ENCODE measurements at regions of chr15 and their contacts with region 1.

Region 1: GRCh38 chr15:44738340-44738984 is 2.1 kb downstream of the TRIM69 start:
- DNase-seq: no peak
- H3K4me3 Mint-ChIP-seq: peak overlapping the region; percentile 12
- H3K27ac Mint-ChIP-seq: peak overlapping the region; percentile 78
- H3K4me1 Mint-ChIP-seq: peaks cover 51% of the 10 kb centered on the region
- H3K27me3 Mint-ChIP-seq: no peaks in the 10 kb centered on the region

Region 2: DNA sequence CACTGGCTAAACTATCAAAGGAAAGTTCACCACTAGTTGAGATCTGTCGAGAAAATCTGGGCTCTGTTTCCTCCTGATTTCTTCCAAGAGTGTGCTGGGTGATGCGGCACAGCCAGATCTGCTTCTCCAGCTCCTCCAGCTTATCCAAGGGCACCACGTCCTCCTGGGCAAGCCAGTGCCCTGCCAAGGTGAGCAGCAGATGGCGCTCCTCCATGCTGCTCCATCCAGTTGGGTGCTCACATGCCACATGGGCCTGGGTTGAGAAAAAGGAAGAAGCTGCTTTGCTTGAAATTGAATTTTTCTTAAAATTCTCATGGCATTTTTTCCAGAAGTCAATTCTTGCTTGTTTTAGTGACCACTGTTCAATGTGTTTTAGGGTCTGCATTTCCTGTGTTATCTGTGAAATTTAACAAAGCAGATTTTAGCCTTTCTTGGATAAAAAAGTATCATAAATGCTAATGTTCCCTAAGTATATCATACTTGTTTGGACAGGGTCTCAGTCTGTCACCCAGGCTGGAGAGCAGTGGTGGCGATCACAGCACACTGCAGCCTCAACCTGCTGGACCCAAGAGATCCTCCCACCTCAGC is 154.2 kb before region 1 on chr15:
- CTCF ChIA-PET with region 1: interaction called, 55 read pairs
- intact Hi-C with region 1: no loop called
- DNase-seq: peak; percentile 77
- H3K4me3 Mint-ChIP-seq: no peak overlapping the region
- H3K27ac Mint-ChIP-seq: no peak overlapping the region
- H3K4me1 Mint-ChIP-seq: peaks cover 7% of the 10 kb centered on the region
- H3K27me3 Mint-ChIP-seq: no peaks in the 10 kb centered on the region

Region 3: GRCh38 chr15:44598892-44599291 is 139.6 kb before region 1 on chr15:
- CTCF ChIA-PET with region 1: interaction called, 12 read pairs
- intact Hi-C with region 1: no loop called
- DNase-seq: no peak
- H3K4me3 Mint-ChIP-seq: no peak overlapping the region
- H3K27ac Mint-ChIP-seq: no peak overlapping the region
- H3K4me1 Mint-ChIP-seq: peaks cover 26% of the 10 kb centered on the region
- H3K27me3 Mint-ChIP-seq: no peaks in the 10 kb centered on the region

Region 4: GRCh38 chr15:44633603-44634002 is 104.9 kb before region 1 on chr15:
- CTCF ChIA-PET with region 1: interaction called, 4 read pairs
- intact Hi-C with region 1: loop called (anchors 1 kb)
- DNase-seq: peak; percentile 34
- H3K4me3 Mint-ChIP-seq: peak overlapping the region; percentile 65
- H3K27ac Mint-ChIP-seq: peak overlapping the region; percentile 98
- H3K4me1 Mint-ChIP-seq: peaks cover 34% of the 10 kb centered on the region
- H3K27me3 Mint-ChIP-seq: no peaks in the 10 kb centered on the region

Region 5: DNA sequence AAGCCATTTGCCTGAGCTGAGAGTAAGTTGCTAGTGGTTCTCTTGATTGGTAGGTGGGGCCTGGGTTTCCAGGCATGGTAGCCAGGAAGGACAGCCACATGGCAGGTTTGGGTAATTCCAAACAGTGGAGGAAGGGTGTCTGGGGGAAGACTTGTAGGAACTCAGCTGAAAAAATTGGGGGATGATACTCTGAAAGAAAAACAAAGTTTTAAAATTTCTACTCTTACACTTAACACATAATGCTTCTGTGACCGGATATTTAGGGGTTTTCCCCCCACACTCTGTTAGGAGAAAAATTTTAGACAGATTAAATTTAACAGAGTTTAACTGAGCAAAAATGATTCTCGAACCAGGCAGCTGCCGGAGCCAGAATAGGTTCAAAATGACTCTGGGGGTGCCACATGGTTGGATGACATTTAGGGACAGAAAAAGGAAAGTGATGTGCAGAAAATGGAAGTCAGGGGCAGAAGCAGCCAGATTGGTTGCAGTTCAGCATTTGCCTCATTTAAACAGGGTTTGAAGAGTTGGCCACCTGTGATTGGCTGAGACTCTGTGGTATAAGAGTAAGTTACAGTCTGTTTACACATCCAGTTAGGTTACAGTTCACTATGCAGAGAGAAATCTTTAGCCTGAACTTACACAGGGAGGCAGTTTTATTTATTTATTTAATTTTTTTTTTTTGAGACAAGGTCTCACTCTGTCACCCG is 19.0 kb before region 1 on chr15:
- CTCF ChIA-PET with region 1: interaction called, 128 read pairs
- intact Hi-C with region 1: loop called (anchors 2 kb)
- DNase-seq: peak; percentile 90
- H3K4me3 Mint-ChIP-seq: peak overlapping the region; percentile 58
- H3K27ac Mint-ChIP-seq: peak overlapping the region; percentile 100
- H3K4me1 Mint-ChIP-seq: peaks cover 88% of the 10 kb centered on the region
- H3K27me3 Mint-ChIP-seq: no peaks in the 10 kb centered on the region

Measured in activated naive CD4-positive, alpha-beta T cell treated with anti-CD3 and anti-CD28 coated beads for 36 hours (primary cell).